ENCODE measurements at regions of chr10 and their contacts with region 1.

Region 1: DNA sequence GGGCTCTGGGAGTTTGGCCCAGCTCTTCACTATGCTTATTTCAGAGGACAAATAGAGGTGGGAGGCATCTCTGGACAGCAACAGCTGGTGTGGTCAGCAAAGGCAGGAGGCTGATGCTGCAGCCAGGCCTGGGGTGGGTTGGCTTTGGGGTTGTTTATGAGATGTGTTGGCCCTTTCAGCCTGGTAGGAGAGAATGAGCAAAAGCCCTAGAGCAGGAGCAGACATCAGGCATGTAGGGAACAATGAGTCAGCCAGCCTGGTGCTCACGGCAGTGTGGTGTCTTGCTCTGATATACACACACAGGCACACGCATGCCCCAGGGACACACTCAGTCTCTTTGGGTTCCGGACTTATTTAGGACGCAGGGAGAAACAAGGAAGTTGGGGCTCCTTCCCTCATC is 157.1 kb downstream of the PRKCQ start:
- DNase-seq: no peak
- H3K4me3 ChIP-seq: no peak overlapping the region
- H3K27ac ChIP-seq: no peak overlapping the region
- H3K4me1 ChIP-seq: no peaks in the 10 kb centered on the region
- H3K27me3 ChIP-seq: no peaks in the 10 kb centered on the region
- CTCF ChIP-seq: no peak

Region 2: DNA sequence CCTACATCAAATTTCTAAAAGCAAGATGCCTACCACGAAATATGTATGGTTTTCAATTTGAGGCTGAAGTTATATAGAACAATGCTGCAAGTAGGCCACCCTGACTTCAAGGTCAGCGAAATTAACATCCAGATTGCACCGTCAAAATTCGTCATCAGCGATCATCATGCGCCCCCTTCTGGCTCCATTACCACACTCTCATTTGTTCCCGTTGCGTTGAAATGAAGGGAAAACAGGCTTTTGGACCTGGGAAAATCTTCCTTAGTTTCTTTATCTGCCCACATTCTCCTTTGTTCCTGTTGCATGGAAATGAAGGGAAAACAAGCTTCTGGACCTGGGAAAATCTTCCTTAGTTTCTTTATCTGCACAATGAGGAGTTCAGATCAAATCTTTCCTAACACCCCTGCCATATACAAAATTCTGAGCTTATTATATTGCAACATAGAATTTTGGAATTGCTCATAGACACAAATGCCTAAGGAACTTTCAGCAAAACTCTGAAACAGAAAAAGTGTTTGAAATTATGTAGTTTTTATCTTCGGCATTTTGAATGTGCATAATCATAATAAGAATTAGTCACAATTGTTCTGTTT is 255.3 kb after region 1 on chr10:
- intact Hi-C with region 1: loop called (anchors 10 kb)
- DNase-seq: peak in 4 of 5 donors; percentile 39 to 72 (median 59)
- H3K4me3 ChIP-seq: no peak overlapping the region
- H3K27ac ChIP-seq: no peak overlapping the region
- H3K4me1 ChIP-seq: no peaks in the 10 kb centered on the region
- H3K27me3 ChIP-seq: no peaks in the 10 kb centered on the region
- CTCF ChIP-seq: peak; percentile 82